Activated T-helper 2 cell treated with anti-CD3 and anti-CD28 coated beads, Interferon-gamma antibody, Interleukin-2, Interleukin-4, amounts not matched to agents 10 μg/mL and 5 μg/mL and 100 μg/mL, durations not matched to agents 14 hours and 24 hours and 36 hours (primary cell): ENCODE measurements at regions of chr11 and their contacts with region 1.

Region 1: GRCh38 chr11:58579192-58580129 is 598 bp downstream of the ZFP91 start:
- DNase-seq: peak; percentile 88
- H3K4me3 Mint-ChIP-seq: peak overlapping the region; percentile 95
- H3K27ac Mint-ChIP-seq: peak overlapping the region; percentile 100
- H3K4me1 Mint-ChIP-seq: peaks cover 48% of the 10 kb centered on the region
- H3K27me3 Mint-ChIP-seq: no peaks in the 10 kb centered on the region

Region 2: GRCh38 chr11:57530596-57531507 is 1048.6 kb before region 1 on chr11 and contains the start of gene TIMM10:
- intact Hi-C with region 1: loop called (anchors 10 kb)
- DNase-seq: peak; percentile 93
- H3K4me3 Mint-ChIP-seq: peak within 1 kb of the TSS; percentile 91
- H3K27ac Mint-ChIP-seq: peak within 1 kb of the TSS; percentile 93
- H3K4me1 Mint-ChIP-seq: peaks cover 27% of the 10 kb centered on the region
- H3K27me3 Mint-ChIP-seq: no peaks in the 10 kb centered on the region
- total RNA-seq, gene TIMM10: 76.9 and 90.0 TPM in 2 replicates

Region 3: GRCh38 chr11:57741132-57742086 is 838.1 kb before region 1 on chr11 and contains the start of gene SELENOH:
- intact Hi-C with region 1: loop called (anchors 5 kb)
- DNase-seq: peak; percentile 94
- H3K4me3 Mint-ChIP-seq: peak within 1 kb of the TSS; percentile 96
- H3K27ac Mint-ChIP-seq: peak within 1 kb of the TSS; percentile 90
- H3K4me1 Mint-ChIP-seq: peaks cover 17% of the 10 kb centered on the region
- H3K27me3 Mint-ChIP-seq: no peaks in the 10 kb centered on the region
- total RNA-seq, gene SELENOH: 179 and 183 TPM in 2 replicates

Region 4: GRCh38 chr11:58192229-58192628 is 387.2 kb before region 1 on chr11:
- intact Hi-C with region 1: no loop called
- DNase-seq: no peak
- H3K4me3 Mint-ChIP-seq: no peak overlapping the region
- H3K27ac Mint-ChIP-seq: no peak overlapping the region
- H3K4me1 Mint-ChIP-seq: no peaks in the 10 kb centered on the region
- H3K27me3 Mint-ChIP-seq: no peaks in the 10 kb centered on the region

Region 5: DNA sequence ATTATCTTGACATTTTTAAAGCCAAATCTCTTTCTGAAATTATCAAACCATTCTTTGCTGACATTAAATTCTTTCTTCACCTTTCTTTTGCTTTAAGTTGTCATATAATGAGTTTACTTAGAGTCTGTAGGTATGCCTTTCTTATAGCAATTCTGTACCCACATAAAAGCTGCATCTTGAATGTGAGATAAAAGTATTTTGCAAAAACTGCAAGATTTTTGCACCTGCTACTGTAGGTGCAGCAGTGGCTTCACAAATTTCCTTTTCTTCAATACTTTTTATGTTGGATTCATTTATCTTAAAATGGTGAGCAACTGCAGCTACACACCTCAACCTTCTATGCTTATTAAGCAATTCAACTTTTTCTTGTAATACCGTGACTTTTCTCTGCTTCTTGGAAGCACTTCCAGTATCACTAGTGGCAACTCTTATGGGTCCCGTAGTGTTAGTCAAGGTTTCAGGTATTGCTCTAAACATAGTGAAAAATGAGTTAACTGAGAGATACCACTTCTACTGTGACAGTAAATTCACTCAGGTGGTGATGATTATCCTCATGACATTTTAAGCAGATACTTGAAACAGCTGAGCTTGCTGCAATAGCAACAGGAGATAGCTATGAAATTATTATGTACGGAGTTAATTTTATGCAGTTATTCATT is 18.2 kb after region 1 on chr11:
- intact Hi-C with region 1: loop called (anchors 1 kb)
- DNase-seq: no peak
- H3K4me3 Mint-ChIP-seq: no peak overlapping the region
- H3K27ac Mint-ChIP-seq: peak overlapping the region; percentile 20
- H3K4me1 Mint-ChIP-seq: peaks cover 66% of the 10 kb centered on the region
- H3K27me3 Mint-ChIP-seq: no peaks in the 10 kb centered on the region

Region 6: GRCh38 chr11:58675334-58676155 is 96.1 kb after region 1 on chr11:
- intact Hi-C with region 1: loop called (anchors 2 kb)
- DNase-seq: peak; percentile 49
- H3K4me3 Mint-ChIP-seq: no peak overlapping the region
- H3K27ac Mint-ChIP-seq: no peak overlapping the region
- H3K4me1 Mint-ChIP-seq: no peaks in the 10 kb centered on the region
- H3K27me3 Mint-ChIP-seq: no peaks in the 10 kb centered on the region

Region 7: GRCh38 chr11:59560702-59561469 is 981.4 kb after region 1 on chr11:
- intact Hi-C with region 1: loop called (anchors 10 kb)
- DNase-seq: peak; percentile 63
- H3K4me3 Mint-ChIP-seq: peak overlapping the region; percentile 90
- H3K27ac Mint-ChIP-seq: peak overlapping the region; percentile 93
- H3K4me1 Mint-ChIP-seq: peaks cover 47% of the 10 kb centered on the region
- H3K27me3 Mint-ChIP-seq: no peaks in the 10 kb centered on the region